ENCODE measurements at regions of chr12 and their contacts with region 1.

Region 1: GRCh38 chr12:108664338-108665258 is 30.9 kb upstream of the SELPLG start:
- DNase-seq: peak; percentile 90
- H3K4me3 Mint-ChIP-seq: no peak overlapping the region
- H3K27ac Mint-ChIP-seq: peak overlapping the region; percentile 80
- H3K4me1 Mint-ChIP-seq: peaks cover 14% of the 10 kb centered on the region
- H3K27me3 Mint-ChIP-seq: no peaks in the 10 kb centered on the region

Region 2: DNA sequence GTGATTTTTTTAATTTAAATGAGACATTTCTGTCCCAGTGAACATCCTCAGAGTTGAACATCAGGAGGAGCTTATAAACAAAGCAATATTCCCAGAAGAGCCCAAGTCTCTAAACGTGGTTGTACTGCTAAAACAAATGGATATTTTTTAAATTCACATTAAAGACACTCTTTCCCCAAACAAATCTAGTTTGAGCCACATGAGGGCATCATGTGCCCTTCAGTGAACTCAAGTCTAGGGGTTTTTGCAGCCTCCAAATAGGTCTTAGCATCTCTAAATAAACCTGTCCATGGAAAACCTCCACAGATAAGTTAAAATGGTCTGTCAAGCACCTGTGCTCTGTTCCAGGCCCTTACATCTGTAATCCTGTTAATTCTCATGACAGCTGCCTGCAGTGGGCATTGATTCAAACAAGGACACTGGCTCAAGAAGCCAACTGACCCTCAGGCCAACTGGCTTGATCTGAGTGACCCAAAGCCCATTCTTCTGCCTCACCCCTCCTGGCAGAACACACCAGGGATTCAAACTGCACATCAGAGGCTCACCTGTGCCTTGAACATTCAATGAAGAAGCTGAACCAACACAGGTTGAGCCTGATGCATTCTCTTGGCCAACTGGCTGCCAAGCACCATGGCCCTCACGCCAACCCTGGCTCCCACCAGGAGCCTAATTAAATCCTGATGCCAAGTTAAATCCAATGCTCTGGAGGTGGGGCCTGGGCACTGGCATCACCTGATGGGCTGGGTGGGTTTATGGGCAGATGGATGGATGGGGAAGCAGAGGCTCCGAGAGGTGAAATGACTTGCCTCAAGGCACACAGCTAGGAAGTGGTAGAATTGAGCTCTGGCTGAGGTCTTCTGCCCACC is 93.6 kb before region 1 on chr12:
- CTCF ChIA-PET with region 1: interaction called, 17 read pairs
- DNase-seq: no peak
- H3K4me3 Mint-ChIP-seq: no peak overlapping the region
- H3K27ac Mint-ChIP-seq: peak overlapping the region; percentile 78
- H3K4me1 Mint-ChIP-seq: peaks cover 80% of the 10 kb centered on the region
- H3K27me3 Mint-ChIP-seq: peaks cover 5% of the 10 kb centered on the region

Region 3: DNA sequence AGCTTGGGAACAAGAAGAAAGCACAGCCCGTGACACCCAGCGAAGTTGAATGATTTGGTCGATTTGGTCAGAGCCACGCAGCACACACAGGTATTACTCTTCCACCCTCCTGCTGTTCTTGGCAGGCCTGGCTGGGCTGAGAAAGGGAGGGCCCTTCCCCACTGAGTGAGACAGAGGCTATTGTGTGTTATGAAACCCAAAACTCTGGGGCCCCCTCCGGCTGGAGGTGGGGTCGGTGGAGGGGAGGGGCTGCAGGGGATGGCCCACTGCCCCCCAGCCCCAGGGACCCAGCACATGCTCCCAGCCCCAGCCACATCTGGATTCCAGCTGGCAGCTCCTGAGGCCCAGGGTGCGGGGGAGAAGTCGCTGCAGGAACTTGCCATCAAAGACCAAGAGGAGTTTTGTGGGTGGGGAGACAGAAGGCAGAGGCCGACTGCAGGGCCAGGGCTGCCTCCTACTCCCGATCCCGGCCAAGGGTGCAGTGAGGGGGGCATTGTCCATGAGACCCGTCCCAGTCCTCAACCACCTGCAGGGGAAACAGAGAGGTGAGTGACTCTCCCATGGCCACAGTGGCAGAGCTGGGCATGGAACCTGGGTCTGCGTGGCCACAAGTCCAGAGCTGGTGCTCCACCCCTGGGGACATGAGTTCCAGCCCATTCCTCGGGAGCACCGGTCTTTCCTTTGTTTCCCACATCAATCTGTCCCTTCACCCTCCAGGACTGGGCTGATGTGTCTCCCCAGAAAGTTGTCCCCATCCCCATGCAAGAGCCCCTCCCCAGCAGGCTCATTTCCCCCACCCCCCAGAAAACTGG is 75.4 kb before region 1 on chr12:
- CTCF ChIA-PET with region 1: no interaction called
- DNase-seq: no peak
- H3K4me3 Mint-ChIP-seq: no peak overlapping the region
- H3K27ac Mint-ChIP-seq: no peak overlapping the region
- H3K4me1 Mint-ChIP-seq: no peaks in the 10 kb centered on the region
- H3K27me3 Mint-ChIP-seq: peaks cover 6% of the 10 kb centered on the region

Region 4: GRCh38 chr12:108640802-108641445 is 23.7 kb before region 1 on chr12:
- CTCF ChIA-PET with region 1: interaction called, 10 read pairs
- DNase-seq: no peak
- H3K4me3 Mint-ChIP-seq: no peak overlapping the region
- H3K27ac Mint-ChIP-seq: no peak overlapping the region
- H3K4me1 Mint-ChIP-seq: peaks cover 55% of the 10 kb centered on the region
- H3K27me3 Mint-ChIP-seq: peaks cover 5% of the 10 kb centered on the region

Region 5: GRCh38 chr12:108691175-108691997 is 26.8 kb after region 1 on chr12:
- CTCF ChIA-PET with region 1: interaction called, 59 read pairs
- DNase-seq: peak; percentile 75
- H3K4me3 Mint-ChIP-seq: peak overlapping the region; percentile 29
- H3K27ac Mint-ChIP-seq: peak overlapping the region; percentile 77
- H3K4me1 Mint-ChIP-seq: peaks cover 66% of the 10 kb centered on the region
- H3K27me3 Mint-ChIP-seq: no peaks in the 10 kb centered on the region

Region 6: DNA sequence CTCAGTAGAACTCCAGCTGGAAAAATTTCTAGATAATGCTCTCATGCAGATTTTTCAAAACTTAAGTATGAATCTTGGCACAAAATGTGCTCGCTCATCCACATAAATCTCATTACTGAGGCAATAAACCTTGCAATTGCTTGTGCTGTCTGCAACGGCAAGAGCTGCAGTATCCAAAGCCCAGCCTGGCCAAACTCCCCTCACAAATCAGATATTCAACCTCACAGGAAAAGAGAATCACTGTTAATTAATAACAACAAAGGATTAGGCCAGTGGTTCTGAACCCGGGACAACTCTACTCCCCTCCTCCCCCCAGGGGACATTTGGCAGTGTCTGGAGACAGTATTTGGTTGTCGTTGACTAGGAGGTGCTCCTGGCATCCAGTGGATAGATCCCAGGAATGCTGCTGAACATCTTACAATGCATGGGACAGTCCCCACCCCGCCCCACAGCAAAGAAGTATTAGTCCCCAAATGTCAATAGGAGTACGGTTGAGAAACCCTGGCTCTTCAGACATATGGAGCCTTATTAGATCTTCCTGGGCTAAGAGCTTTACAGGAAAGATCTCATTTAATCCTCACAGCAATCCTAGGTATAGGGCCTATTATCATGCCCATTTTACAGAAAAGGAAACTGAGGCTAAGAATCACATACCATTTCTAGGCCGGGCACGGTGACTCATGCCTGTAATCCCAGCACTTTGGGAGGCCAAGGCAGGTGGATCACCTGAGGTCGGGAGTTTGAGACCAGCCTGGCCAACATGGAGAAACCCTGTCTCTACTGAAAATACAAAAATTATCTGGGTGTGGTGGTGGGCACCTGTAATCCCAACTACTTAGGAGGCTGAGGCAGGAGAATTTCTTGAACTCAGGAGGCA is 86.2 kb after region 1 on chr12:
- CTCF ChIA-PET with region 1: no interaction called
- DNase-seq: no peak
- H3K4me3 Mint-ChIP-seq: no peak overlapping the region
- H3K27ac Mint-ChIP-seq: no peak overlapping the region
- H3K4me1 Mint-ChIP-seq: no peaks in the 10 kb centered on the region
- H3K27me3 Mint-ChIP-seq: peaks cover 6% of the 10 kb centered on the region

Region 7: GRCh38 chr12:108803428-108804105 is 139.0 kb after region 1 on chr12:
- CTCF ChIA-PET with region 1: interaction called, 168 read pairs
- DNase-seq: peak; percentile 75
- H3K4me3 Mint-ChIP-seq: no peak overlapping the region
- H3K27ac Mint-ChIP-seq: peak overlapping the region; percentile 76
- H3K4me1 Mint-ChIP-seq: peaks cover 4% of the 10 kb centered on the region
- H3K27me3 Mint-ChIP-seq: no peaks in the 10 kb centered on the region